KBM-7 (cell line): ENCODE measurements at regions of chr16 and their contacts with region 1.

Region 1: GRCh38 chr16:22710326-22710725 is 103.6 kb upstream of the HS3ST2 start:
- DNase-seq: no peak

Region 2: GRCh38 chr16:22770866-22771265 is 60.5 kb after region 1 on chr16:
- in situ Hi-C with region 1: loop called (anchors 10 kb)
- DNase-seq: no peak